Activated T-helper 1 cell treated with anti-CD3 and anti-CD28 coated beads, Interleukin-12 subunit alpha, Interleukin-12 subunit beta, Interleukin-2, Interleukin-4 antibody, amounts not matched to agents 30 ng/mL and 10 ng/mL and 1 ng/mL, durations not matched to agents 14 hours and 24 hours and 36 hours (primary cell): ENCODE measurements at regions of chr12 and their contacts with region 1.

Region 1: GRCh38 chr12:105330283-105330930 is at the start of gene C12orf75:
- DNase-seq: peak; percentile 93
- H3K4me3 Mint-ChIP-seq: peak within 1 kb of the TSS; percentile 87
- H3K27ac Mint-ChIP-seq: peak within 1 kb of the TSS; percentile 91
- H3K4me1 Mint-ChIP-seq: peaks cover 83% of the 10 kb centered on the region
- H3K27me3 Mint-ChIP-seq: no peaks in the 10 kb centered on the region
- total RNA-seq, gene C12orf75: 87.8 and 93.4 TPM in 2 replicates

Region 2: GRCh38 chr12:104137913-104138796 is 1192.3 kb before region 1 on chr12 and contains the start of gene NFYB:
- intact Hi-C with region 1: loop called (anchors 10 kb)
- DNase-seq: peak; percentile 91
- H3K4me3 Mint-ChIP-seq: peak within 1 kb of the TSS; percentile 87
- H3K27ac Mint-ChIP-seq: peak within 1 kb of the TSS; percentile 88
- H3K4me1 Mint-ChIP-seq: peaks cover 16% of the 10 kb centered on the region
- H3K27me3 Mint-ChIP-seq: peaks cover 7% of the 10 kb centered on the region
- total RNA-seq, gene NFYB: 25.0 and 25.2 TPM in 2 replicates

Region 3: GRCh38 chr12:105235732-105236476 is 94.5 kb before region 1 on chr12 and contains the start of gene APPL2:
- intact Hi-C with region 1: loop called (anchors 1 kb)
- DNase-seq: peak; percentile 71
- H3K4me3 Mint-ChIP-seq: peak within 1 kb of the TSS; percentile 91
- H3K27ac Mint-ChIP-seq: peak within 1 kb of the TSS; percentile 77
- H3K4me1 Mint-ChIP-seq: peaks cover 32% of the 10 kb centered on the region
- H3K27me3 Mint-ChIP-seq: peaks cover 3% of the 10 kb centered on the region
- total RNA-seq, gene APPL2: 22.9 and 27.8 TPM in 2 replicates

Region 4: GRCh38 chr12:105292705-105293104 is 37.7 kb before region 1 on chr12:
- intact Hi-C with region 1: loop called (anchors 5 kb)
- DNase-seq: no peak
- H3K4me3 Mint-ChIP-seq: no peak overlapping the region
- H3K27ac Mint-ChIP-seq: no peak overlapping the region
- H3K4me1 Mint-ChIP-seq: no peaks in the 10 kb centered on the region
- H3K27me3 Mint-ChIP-seq: peaks cover 5% of the 10 kb centered on the region